Right ventricle myocardium inferior (tissue), 1 donor: ENCODE measurements at regions of chr4 and their contacts with region 1.

Region 1: DNA sequence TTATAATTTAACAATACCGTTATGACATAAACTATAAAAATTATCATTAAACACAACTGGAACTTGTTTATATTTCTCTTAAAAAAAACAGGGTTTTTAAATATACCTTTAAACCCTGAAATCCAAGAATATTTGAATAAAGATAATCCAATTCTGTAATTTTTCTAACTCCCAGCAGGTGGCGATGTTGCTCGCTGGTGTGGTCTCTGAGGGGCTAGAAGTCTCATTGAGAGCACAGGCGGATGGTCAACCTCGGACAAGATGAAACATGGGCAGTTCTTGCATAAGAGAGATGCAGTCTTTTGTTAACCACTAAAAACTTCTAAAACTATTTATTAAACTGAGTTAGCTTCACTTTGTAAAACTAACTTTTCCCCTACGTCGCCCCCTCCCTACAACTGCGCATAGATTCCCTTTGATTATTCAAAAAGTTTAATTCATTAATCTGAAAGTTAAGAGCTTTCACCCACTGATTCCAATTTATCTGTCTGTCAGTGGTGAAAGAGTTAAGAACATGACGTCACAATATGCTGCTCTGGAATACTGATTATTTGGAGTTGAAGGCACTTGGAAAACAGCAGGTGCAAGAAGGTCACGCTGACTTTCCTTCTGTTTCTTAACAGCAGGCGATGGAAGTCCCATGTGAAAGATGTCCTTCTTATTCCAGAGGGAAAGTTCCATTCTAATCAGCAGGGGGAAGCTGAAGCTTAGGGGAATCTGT is 29.5 kb downstream of the DMP1 start:
- DNase-seq: no peak
- ATAC-seq: peak; percentile 86

Region 2: DNA sequence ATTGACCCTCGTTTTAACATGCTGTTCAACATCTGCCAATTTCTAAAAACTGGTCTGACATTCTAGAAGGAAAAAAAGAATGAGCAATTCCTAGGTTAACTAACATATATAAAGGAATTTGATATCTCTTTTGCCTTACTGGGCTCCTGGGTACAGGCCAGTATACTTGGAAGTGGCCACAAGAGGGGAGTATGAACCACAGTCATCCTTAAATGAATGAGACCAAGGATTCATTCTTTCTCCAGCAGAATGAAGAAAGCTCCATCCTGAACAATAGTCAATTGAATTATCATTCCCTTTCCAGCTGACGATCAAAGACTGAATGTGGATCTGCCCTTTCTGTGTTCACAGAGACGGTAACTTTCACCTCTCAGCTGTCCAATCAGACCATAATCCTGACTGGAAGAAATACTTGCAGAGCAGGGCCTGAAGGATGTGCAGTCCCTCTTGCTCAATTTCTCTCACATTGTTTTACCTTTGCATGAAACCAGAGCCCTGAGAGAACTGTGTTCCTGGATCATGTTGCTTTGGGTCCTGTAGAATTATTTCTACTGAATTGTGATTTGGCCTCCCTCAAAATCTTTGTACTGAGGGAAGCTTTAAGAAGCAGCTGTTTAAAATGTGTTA is 135.7 kb before region 1 on chr4:
- intact Hi-C with region 1: loop called (anchors 5 kb)
- DNase-seq: no peak
- ATAC-seq: peak; percentile 39

Region 3: GRCh38 chr4:87608229-87608628 is 71.4 kb before region 1 on chr4 and contains the start of gene DSPP:
- intact Hi-C with region 1: no loop called
- DNase-seq: no peak
- ATAC-seq: no peak
- total RNA-seq, gene DSPP: not detected

Region 4: GRCh38 chr4:87838890-87839591 is 159.4 kb after region 1 on chr4:
- intact Hi-C with region 1: loop called (anchors 2 kb)
- DNase-seq: peak; percentile 73
- ATAC-seq: peak; percentile 56

Region 5: GRCh38 chr4:87973283-87974169 is 293.9 kb after region 1 on chr4:
- intact Hi-C with region 1: loop called (anchors 10 kb)
- DNase-seq: no peak
- ATAC-seq: peak; percentile 52

Region 6: DNA sequence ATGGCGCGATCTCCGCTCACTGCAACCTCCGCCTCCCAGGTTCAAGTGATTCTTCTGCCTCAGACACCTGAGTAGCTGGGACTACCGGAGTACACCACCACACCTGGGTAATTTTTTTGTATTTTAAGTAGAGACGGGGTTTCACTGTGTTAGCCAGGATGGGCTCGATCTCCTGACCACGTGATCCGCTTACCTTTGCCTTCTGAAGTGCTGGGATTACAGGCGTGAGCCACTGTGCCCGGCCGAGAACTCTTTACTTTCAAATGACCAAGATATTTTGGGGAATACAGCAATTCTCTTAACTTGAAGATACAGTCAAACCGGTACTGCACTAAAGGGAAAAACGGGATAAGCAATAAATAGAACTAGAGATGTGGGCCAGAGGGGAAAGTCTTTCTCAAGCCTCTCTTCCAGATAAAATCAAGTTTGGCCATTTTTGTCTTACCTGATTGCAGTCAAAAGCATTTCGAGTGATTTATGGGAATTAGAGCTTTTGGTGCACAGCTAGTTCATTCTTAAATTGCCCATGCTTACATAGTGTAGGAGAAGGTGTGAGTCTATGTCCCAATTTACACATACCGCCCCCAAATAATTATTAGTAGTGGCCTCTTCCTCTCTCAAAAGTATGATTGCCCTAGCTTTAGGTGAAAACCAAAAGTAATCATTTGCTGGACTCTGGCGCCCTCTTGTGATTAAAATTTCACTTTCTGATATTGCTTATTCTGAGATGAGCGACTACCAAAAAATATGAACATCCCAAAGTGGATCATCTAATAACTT is 532.1 kb after region 1 on chr4:
- intact Hi-C with region 1: loop called (anchors 5 kb)
- DNase-seq: no peak
- ATAC-seq: no peak